Activated CD8-positive, alpha-beta T cell treated with anti-CD3 and anti-CD28 coated beads for 36 hours (primary cell): ENCODE measurements at regions of chr15 and their contacts with region 1.

Region 1: GRCh38 chr15:70097337-70098169 is at the start of gene TLE3:
- DNase-seq: peak; percentile 99
- ATAC-seq: peak; percentile 60
- H3K4me3 Mint-ChIP-seq: peak within 1 kb of the TSS; percentile 92
- H3K27ac Mint-ChIP-seq: peak within 1 kb of the TSS; percentile 100
- H3K4me1 Mint-ChIP-seq: peaks cover 29% of the 10 kb centered on the region
- H3K27me3 Mint-ChIP-seq: peaks cover 5% of the 10 kb centered on the region
- CTCF ChIP-seq: peak; percentile 20
- total RNA-seq, gene TLE3: 48.4 to 64.2 TPM

Region 2: GRCh38 chr15:69452692-69453521 is 644.6 kb before region 1 on chr15 and contains the start of gene RPLP1:
- CTCF ChIA-PET with region 1: no interaction called
- POLR2A ChIA-PET with region 1: interaction called, 37 read pairs
- intact Hi-C with region 1: no loop called
- DNase-seq: peak; percentile 97
- ATAC-seq: peak; percentile 95
- H3K4me3 Mint-ChIP-seq: peak within 1 kb of the TSS; percentile 99
- H3K27ac Mint-ChIP-seq: peak within 1 kb of the TSS; percentile 99
- H3K4me1 Mint-ChIP-seq: peaks cover 24% of the 10 kb centered on the region
- H3K27me3 Mint-ChIP-seq: no peaks in the 10 kb centered on the region
- CTCF ChIP-seq: no peak
- total RNA-seq, gene RPLP1: 2,583 to 2,701 TPM

Region 3: DNA sequence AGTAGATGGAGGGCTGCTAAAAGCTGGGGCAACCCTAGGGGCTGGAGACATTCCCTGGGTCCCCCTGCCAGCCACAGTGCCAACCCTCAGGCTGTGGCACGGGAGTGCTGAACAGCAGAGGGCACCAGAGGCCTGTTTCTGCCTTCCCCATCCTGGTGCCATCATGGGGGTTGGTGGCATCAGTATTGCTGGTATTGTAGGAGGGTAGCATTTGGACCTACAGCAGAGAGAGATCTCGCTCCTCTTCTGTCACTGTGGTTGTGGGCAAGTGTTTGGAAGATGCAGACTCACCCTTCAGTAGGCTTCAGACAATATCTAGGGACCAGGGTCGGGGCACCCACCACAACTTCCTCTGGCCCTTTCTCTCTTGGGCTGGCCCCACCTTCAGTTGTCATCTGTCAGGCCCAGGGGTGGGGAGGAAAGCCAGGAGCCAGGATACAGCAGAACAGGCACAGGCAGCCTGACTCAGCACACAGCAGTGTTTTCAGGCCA is 521.5 kb before region 1 on chr15:
- CTCF ChIA-PET with region 1: interaction called, 3 read pairs
- POLR2A ChIA-PET with region 1: no interaction called
- intact Hi-C with region 1: loop called (anchors 10 kb)
- DNase-seq: peak; percentile 78
- ATAC-seq: peak; percentile 43
- H3K4me3 Mint-ChIP-seq: no peak overlapping the region
- H3K27ac Mint-ChIP-seq: no peak overlapping the region
- H3K4me1 Mint-ChIP-seq: peaks cover 32% of the 10 kb centered on the region
- H3K27me3 Mint-ChIP-seq: no peaks in the 10 kb centered on the region
- CTCF ChIP-seq: peak; percentile 69

Region 4: GRCh38 chr15:69755551-69756310 is 341.8 kb before region 1 on chr15:
- CTCF ChIA-PET with region 1: interaction called, 4 read pairs
- POLR2A ChIA-PET with region 1: interaction called, 34 read pairs
- intact Hi-C with region 1: loop called (anchors 5 kb)
- DNase-seq: peak; percentile 95
- ATAC-seq: peak; percentile 73
- H3K4me3 Mint-ChIP-seq: peak overlapping the region; percentile 19
- H3K27ac Mint-ChIP-seq: peak overlapping the region; percentile 88
- H3K4me1 Mint-ChIP-seq: peaks cover 79% of the 10 kb centered on the region
- H3K27me3 Mint-ChIP-seq: peaks cover 6% of the 10 kb centered on the region
- CTCF ChIP-seq: no peak

Region 5: DNA sequence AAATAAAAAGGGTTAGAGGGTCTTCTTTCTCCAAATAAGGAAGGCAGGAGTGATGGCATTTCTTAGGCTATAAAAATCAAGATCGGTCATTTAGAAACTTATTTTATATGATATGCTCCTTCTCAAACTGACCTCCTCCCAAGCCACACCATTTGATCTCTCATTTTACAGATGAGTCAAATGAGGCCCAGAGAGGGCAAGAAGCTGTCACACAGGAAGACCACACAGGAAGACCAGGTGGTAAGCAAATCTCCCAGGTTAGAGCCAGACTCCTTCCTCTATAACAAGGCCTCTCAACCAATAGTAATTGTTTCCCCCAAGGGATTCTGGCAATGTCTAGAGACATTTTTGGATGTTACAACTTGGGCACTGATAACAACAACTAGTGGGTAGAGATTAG is 13.6 kb before region 1 on chr15:
- CTCF ChIA-PET with region 1: interaction called, 11 read pairs
- POLR2A ChIA-PET with region 1: interaction called, 33 read pairs
- intact Hi-C with region 1: no loop called
- DNase-seq: peak; percentile 54
- ATAC-seq: peak; percentile 87
- H3K4me3 Mint-ChIP-seq: no peak overlapping the region
- H3K27ac Mint-ChIP-seq: no peak overlapping the region
- H3K4me1 Mint-ChIP-seq: peaks cover 65% of the 10 kb centered on the region
- H3K27me3 Mint-ChIP-seq: no peaks in the 10 kb centered on the region
- CTCF ChIP-seq: no peak

Region 6: DNA sequence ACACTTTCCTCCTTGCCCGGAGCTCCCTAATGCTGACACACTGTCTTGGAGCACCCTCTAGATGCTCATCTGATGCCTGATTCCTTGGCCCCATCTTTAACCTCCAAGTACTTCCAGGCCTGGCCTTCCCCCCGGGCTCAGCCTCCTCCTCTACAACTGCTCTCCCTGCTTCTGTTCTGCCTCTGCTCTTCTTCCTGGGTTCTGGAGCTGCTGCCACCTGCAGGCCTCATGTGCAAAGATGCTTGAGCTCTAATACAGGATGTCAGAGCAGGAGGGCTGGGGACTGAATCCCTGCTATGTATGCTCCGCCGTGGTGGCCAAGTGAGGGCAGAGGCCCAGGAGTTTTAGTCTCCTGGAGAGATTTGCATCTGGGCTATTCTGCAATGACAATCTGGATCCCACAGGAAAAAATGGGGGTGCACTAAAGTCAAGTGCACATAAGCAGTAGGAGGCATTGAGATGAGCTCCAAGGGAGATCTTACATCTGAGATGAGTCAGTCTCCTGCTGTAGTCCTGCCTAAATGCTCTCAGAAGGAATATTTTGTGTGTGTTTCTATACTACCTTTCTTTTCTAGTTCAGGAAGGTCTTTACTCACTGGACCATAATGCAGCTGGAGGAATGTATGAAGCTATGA is 369.5 kb after region 1 on chr15:
- CTCF ChIA-PET with region 1: interaction called, 14 read pairs
- POLR2A ChIA-PET with region 1: no interaction called
- intact Hi-C with region 1: no loop called
- DNase-seq: peak; percentile 72
- ATAC-seq: peak; percentile 88
- H3K4me3 Mint-ChIP-seq: no peak overlapping the region
- H3K27ac Mint-ChIP-seq: no peak overlapping the region
- H3K4me1 Mint-ChIP-seq: no peaks in the 10 kb centered on the region
- H3K27me3 Mint-ChIP-seq: peaks cover 16% of the 10 kb centered on the region
- CTCF ChIP-seq: peak; percentile 68